Endothelial cell of umbilical vein (primary cell): ENCODE measurements at regions of chr7 and their contacts with region 1.

Region 1: GRCh38 chr7:23570592-23571200 is 26.5 kb upstream of the CCDC126 start:
- DNase-seq: peak; percentile 77
- H3K4me3 ChIP-seq: no peak overlapping the region
- H3K27ac ChIP-seq: no peak overlapping the region
- H3K4me1 ChIP-seq: no peaks in the 10 kb centered on the region
- H3K27me3 ChIP-seq: peaks cover 0 to 3% of the 10 kb centered on the region in 2 experiments
- CTCF ChIP-seq: peak; percentile 77 to 79
- POLR2A ChIP-seq: no peak

Region 2: DNA sequence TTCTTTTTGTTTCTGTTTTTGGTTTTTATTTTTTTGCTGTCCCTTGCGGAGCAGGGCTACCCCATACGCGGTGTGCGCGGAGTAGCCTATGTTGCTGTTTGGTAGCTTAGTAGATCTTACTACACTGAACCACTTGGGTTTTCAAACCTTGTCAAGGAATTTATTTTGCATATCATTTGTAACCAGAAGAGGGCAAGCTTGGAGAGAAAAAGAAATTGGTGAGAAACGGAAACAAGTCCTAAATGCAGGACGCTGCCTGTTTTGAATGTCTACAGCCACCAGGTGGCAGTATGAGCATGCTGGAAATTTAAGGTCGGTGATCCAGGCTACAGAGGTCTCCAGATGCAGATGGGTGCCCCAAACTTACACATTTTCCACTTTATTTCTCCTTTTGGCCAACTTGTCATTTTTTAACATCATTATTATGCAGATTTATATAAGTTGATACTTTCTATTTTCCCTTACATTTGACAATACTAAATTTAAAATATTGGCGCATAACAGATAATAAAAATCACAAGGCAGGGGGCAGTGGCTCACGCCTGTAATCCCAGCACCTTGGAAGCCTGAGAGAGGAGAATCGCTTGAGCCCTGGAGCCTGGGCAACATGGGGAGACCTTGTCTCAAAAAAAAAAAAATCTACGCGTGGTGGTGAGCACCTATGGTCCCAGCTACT is 23.7 kb before region 1 on chr7:
- CTCF ChIA-PET with region 1: interaction called, 19 read pairs
- POLR2A ChIA-PET with region 1: interaction called, 6 read pairs
- dilution Hi-C with region 1: no loop called
- intact Hi-C with region 1: loop called (anchors 2 kb)
- DNase-seq: peak; percentile 91
- H3K4me3 ChIP-seq: no peak overlapping the region
- H3K27ac ChIP-seq: no peak overlapping the region
- H3K4me1 ChIP-seq: no peaks in the 10 kb centered on the region
- H3K27me3 ChIP-seq: peaks cover 0 to 2% of the 10 kb centered on the region in 2 experiments
- CTCF ChIP-seq: peak; percentile 82 to 97
- POLR2A ChIP-seq: no peak

Region 3: GRCh38 chr7:23679898-23680413 is 109.3 kb after region 1 on chr7 and contains the start of gene FAM221A:
- CTCF ChIA-PET with region 1: no interaction called
- POLR2A ChIA-PET with region 1: no interaction called
- dilution Hi-C with region 1: no loop called
- intact Hi-C with region 1: loop called (anchors 1 kb)
- DNase-seq: peak; percentile 84
- H3K4me3 ChIP-seq: peak within 1 kb of the TSS; percentile 40 to 80 (median 72)
- H3K27ac ChIP-seq: no peak within 1 kb of the TSS
- H3K4me1 ChIP-seq: peaks cover 2% of the 10 kb centered on the region
- H3K27me3 ChIP-seq: peaks cover 0 to 5% of the 10 kb centered on the region in 2 experiments
- CTCF ChIP-seq: peak; percentile 70 to 89
- POLR2A ChIP-seq: no peak
- total RNA-seq, gene FAM221A: 6.1 and 8.1 TPM in 2 replicates

Region 4: DNA sequence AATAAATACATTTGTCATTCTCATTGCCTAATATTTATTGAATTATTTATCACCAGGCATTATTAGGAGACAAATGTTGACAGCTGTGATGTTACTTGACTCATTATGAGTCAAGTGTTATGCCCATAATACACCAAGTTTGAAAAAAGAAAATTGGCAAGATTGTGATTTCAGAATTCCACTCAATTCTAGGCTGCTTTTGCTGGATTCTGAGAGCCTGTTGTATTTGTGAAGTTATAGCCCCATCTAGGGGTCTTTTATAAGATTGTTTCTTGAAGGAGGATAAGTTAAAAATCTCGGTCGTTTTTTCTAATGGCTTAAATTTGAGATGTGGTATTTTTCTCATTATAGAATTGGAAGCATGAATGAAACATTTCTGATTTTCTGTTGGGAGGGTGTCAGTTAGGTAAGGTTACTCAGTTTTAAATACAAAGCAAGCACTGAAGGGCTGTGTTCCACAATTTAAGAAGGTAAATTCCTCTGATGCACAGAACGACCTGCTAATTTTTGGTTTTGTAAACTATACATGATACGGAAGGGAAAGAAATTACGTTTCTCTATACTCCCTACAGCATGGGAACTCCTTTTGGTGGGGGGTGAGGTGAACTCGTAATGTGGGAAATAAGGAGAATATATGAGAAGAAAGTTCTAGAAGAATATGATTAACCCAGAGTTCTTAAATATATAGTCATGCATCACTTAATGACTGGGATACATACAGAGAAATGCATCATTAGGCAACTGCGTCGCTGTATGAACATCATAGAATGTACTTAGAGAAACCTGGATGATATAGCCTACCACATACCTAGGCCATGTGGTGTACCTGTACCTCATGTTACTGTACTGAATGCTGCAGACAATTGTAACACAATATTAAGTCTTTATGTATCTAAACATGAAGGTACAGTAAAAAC is 141.9 kb after region 1 on chr7:
- CTCF ChIA-PET with region 1: interaction called, 136 read pairs
- POLR2A ChIA-PET with region 1: no interaction called
- dilution Hi-C with region 1: no loop called
- intact Hi-C with region 1: loop called (anchors 1 kb)
- DNase-seq: peak; percentile 58
- H3K4me3 ChIP-seq: no peak overlapping the region
- H3K27ac ChIP-seq: no peak overlapping the region
- H3K4me1 ChIP-seq: no peaks in the 10 kb centered on the region
- H3K27me3 ChIP-seq: no peaks in the 10 kb centered on the region
- CTCF ChIP-seq: peak; percentile 20 to 40
- POLR2A ChIP-seq: no peak

Region 5: GRCh38 chr7:24381894-24382505 is 811.3 kb after region 1 on chr7:
- CTCF ChIA-PET with region 1: interaction called, 12 read pairs
- POLR2A ChIA-PET with region 1: no interaction called
- dilution Hi-C with region 1: no loop called
- intact Hi-C with region 1: no loop called
- DNase-seq: no peak
- H3K4me3 ChIP-seq: no peak overlapping the region
- H3K27ac ChIP-seq: no peak overlapping the region
- H3K4me1 ChIP-seq: no peaks in the 10 kb centered on the region
- H3K27me3 ChIP-seq: no peaks in the 10 kb centered on the region
- CTCF ChIP-seq: peak; percentile 13 to 16
- POLR2A ChIP-seq: no peak

Region 6: GRCh38 chr7:24665564-24666294 is 1095.0 kb after region 1 on chr7:
- CTCF ChIA-PET with region 1: no interaction called
- POLR2A ChIA-PET with region 1: no interaction called
- dilution Hi-C with region 1: no loop called
- intact Hi-C with region 1: loop called (anchors 5 kb)
- DNase-seq: peak; percentile 66
- H3K4me3 ChIP-seq: no peak overlapping the region
- H3K27ac ChIP-seq: no peak overlapping the region
- H3K4me1 ChIP-seq: peaks cover 25% of the 10 kb centered on the region
- H3K27me3 ChIP-seq: no peaks in the 10 kb centered on the region
- CTCF ChIP-seq: peak; percentile 48 to 56
- POLR2A ChIP-seq: no peak

Region 7: GRCh38 chr7:25048444-25048834 is 1477.7 kb after region 1 on chr7:
- CTCF ChIA-PET with region 1: no interaction called
- POLR2A ChIA-PET with region 1: no interaction called
- dilution Hi-C with region 1: no loop called
- intact Hi-C with region 1: no loop called
- DNase-seq: no peak
- H3K4me3 ChIP-seq: no peak overlapping the region
- H3K27ac ChIP-seq: no peak overlapping the region
- H3K4me1 ChIP-seq: no peaks in the 10 kb centered on the region
- H3K27me3 ChIP-seq: no peaks in the 10 kb centered on the region
- CTCF ChIP-seq: no peak
- POLR2A ChIP-seq: no peak